T-cell (primary cell): ENCODE measurements at regions of chr22 and their contacts with region 1.

Region 1: GRCh38 chr22:49869845-49870712 is 16.4 kb downstream of the ZBED4 start:
- DNase-seq: peak in 20 of 35 experiments; percentile 15 to 76 (median 36)
- ATAC-seq: peak; percentile 60 to 74 (median 67)
- H3K4me3 ChIP-seq: no peak overlapping the region
- H3K4me3 Mint-ChIP-seq: peak overlapping the region; percentile 36 to 47 (median 37)
- H3K27ac ChIP-seq: peak overlapping the region; percentile 55
- H3K27ac Mint-ChIP-seq: peak overlapping the region; percentile 77 to 87
- H3K4me1 ChIP-seq: peaks cover 5 to 40% of the 10 kb centered on the region in 2 experiments
- H3K4me1 Mint-ChIP-seq: peaks cover 50 to 75% (median 72%) of the 10 kb centered on the region in 3 donors
- H3K27me3 ChIP-seq: no peaks in the 10 kb centered on the region
- H3K27me3 Mint-ChIP-seq: no peaks in the 10 kb centered on the region

Region 2: GRCh38 chr22:49592780-49593501 is 277.1 kb before region 1 on chr22:
- CTCF ChIA-PET with region 1: no interaction called
- POLR2A ChIA-PET with region 1: no interaction called
- DNase-seq: no peak
- ATAC-seq: no peak
- H3K4me3 ChIP-seq: no peak overlapping the region
- H3K4me3 Mint-ChIP-seq: no peak overlapping the region
- H3K27ac ChIP-seq: no peak overlapping the region
- H3K27ac Mint-ChIP-seq: no peak overlapping the region
- H3K4me1 ChIP-seq: no peaks in the 10 kb centered on the region
- H3K4me1 Mint-ChIP-seq: peaks cover 0 to 3% (median 0%) of the 10 kb centered on the region in 3 donors
- H3K27me3 ChIP-seq: peaks cover 0 to 3% of the 10 kb centered on the region in 2 experiments
- H3K27me3 Mint-ChIP-seq: no peaks in the 10 kb centered on the region

Region 3: DNA sequence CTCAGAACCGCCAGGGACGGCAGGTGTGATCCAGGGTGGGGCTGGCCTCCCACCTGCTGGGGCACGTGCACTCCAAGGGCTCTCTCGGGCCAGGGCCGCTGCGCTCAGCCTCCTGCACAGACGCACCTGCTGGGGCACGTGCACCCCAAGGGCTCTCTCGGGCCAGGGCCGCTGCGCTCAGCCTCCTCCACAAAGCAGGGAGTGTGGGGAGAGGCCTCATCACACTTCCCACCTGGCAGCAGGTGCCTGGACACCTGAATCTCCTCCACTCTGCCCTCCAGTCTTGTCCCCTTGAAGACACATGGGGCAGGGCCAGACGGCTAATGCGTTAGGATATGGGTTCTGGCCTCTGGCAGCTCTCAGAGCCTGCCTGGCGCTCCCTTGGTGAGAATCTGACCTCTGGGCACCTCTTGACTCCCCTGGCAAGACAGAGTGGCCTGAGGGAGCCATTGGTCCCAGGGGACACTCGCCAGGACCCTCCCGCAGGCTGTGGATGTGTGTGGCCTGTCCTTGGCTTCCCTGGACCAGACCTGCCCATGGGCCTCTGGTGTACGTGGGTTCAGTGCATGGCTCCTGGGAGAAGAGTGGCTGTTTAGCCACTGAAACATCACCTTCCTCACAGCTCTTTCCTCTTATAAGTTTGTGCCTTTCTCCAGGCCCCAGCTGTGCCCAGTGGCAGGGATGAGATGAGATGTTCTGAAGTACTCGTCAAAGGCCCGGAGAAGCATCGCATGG is 116.0 kb before region 1 on chr22:
- CTCF ChIA-PET with region 1: no interaction called
- POLR2A ChIA-PET with region 1: no interaction called
- DNase-seq: peak in 1 of 35 experiments; percentile 9
- ATAC-seq: no peak
- H3K4me3 ChIP-seq: no peak overlapping the region
- H3K4me3 Mint-ChIP-seq: no peak overlapping the region
- H3K27ac ChIP-seq: no peak overlapping the region
- H3K27ac Mint-ChIP-seq: no peak overlapping the region
- H3K4me1 ChIP-seq: no peaks in the 10 kb centered on the region
- H3K4me1 Mint-ChIP-seq: no peaks in the 10 kb centered on the region
- H3K27me3 ChIP-seq: peaks cover 0 to 36% of the 10 kb centered on the region in 2 experiments
- H3K27me3 Mint-ChIP-seq: peaks cover 0 to 7% of the 10 kb centered on the region in 2 donors

Region 4: DNA sequence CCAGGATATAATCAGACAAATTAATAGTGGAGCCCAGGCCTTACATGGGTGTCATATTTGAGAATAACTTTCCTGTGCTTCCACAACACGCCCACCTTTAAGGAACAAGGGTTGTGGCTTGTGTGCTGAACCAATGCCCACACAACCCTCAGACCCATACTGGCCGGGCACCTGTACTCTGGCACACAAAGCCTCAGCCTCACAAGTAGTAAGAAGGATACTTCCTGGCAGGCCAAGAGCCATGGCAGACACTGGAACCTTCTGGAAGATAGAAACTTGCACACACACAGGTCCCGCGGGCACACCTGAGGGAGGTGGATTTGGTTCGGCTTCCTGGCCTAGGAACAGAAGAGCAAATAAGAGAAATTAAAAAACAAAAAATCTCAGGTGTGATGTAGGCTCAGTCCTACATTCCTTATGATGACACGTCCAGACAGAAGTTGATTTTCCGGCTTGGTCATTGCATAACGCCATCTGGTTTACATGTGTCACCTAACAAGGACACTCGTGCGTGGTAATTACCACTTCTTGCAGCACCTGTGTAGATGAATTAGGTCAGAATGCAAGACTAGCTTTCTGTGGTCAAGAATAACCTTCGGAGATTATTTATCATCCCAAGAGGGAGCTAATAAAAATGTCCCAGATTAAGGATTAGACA is 36.6 kb before region 1 on chr22:
- CTCF ChIA-PET with region 1: no interaction called
- POLR2A ChIA-PET with region 1: no interaction called
- DNase-seq: no peak
- ATAC-seq: no peak
- H3K4me3 ChIP-seq: no peak overlapping the region
- H3K4me3 Mint-ChIP-seq: no peak overlapping the region
- H3K27ac ChIP-seq: no peak overlapping the region
- H3K27ac Mint-ChIP-seq: peak overlapping the region in 1 of 2 donors; percentile 27
- H3K4me1 ChIP-seq: peaks cover 8 to 28% of the 10 kb centered on the region in 2 experiments
- H3K4me1 Mint-ChIP-seq: peaks cover 30 to 36% (median 32%) of the 10 kb centered on the region in 3 donors
- H3K27me3 ChIP-seq: no peaks in the 10 kb centered on the region
- H3K27me3 Mint-ChIP-seq: no peaks in the 10 kb centered on the region

Region 5: GRCh38 chr22:49848690-49849160 is 21.4 kb before region 1 on chr22:
- CTCF ChIA-PET with region 1: no interaction called
- POLR2A ChIA-PET with region 1: no interaction called
- DNase-seq: peak in 1 of 35 experiments; percentile 39
- ATAC-seq: no peak
- H3K4me3 ChIP-seq: peak overlapping the region; percentile 47 to 51
- H3K4me3 Mint-ChIP-seq: peak overlapping the region in 1 of 3 donors; percentile 58
- H3K27ac ChIP-seq: no peak overlapping the region
- H3K27ac Mint-ChIP-seq: no peak overlapping the region
- H3K4me1 ChIP-seq: peaks cover 9 to 41% of the 10 kb centered on the region in 2 experiments
- H3K4me1 Mint-ChIP-seq: peaks cover 19 to 29% (median 23%) of the 10 kb centered on the region in 3 donors
- H3K27me3 ChIP-seq: peaks cover 0 to 24% of the 10 kb centered on the region in 2 experiments
- H3K27me3 Mint-ChIP-seq: peaks cover 0 to 4% of the 10 kb centered on the region in 2 donors

Region 6: DNA sequence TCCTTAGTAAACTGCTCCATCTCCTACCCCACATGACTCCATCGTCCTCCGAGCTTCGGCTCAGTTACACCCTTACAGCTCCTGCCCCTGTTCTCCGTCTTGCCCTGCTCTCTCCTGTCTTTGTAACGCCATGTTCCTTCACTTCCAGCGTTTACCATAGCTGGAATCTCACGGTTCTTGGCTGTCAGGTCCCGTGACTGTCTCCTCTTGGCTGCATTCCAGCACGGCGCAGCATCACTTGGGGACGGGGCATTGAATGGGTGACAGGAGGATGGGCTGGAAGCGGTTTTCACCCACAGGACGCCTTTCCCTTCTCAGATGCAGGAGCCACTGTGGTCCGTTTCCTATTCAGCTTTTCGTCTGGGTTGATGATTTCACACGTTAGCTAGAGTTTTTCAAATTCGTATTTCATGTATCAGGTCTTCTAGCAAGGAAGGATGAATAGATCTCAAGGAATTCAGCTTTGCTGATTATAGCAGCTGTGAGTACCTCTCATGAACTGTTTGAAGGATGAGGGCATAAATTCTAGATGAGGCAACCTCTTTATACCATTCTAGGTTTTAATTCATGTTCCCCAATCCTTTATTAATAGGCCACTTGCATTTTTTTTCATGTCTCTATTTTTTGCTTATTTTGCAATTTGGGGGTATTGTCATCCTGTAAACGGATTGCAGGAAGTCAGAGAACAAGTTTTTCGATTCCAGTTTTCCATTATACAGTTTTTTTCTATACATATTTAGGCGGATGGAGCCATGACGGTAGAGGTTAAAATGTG is 12.6 kb after region 1 on chr22:
- CTCF ChIA-PET with region 1: interaction called in 1 of 2 experiments, 3 read pairs
- POLR2A ChIA-PET with region 1: interaction called, 5 to 13 read pairs
- DNase-seq: no peak
- ATAC-seq: no peak
- H3K4me3 ChIP-seq: no peak overlapping the region
- H3K4me3 Mint-ChIP-seq: no peak overlapping the region
- H3K27ac ChIP-seq: no peak overlapping the region
- H3K27ac Mint-ChIP-seq: peak overlapping the region in 1 of 2 donors; percentile 50
- H3K4me1 ChIP-seq: peaks cover 0 to 18% of the 10 kb centered on the region in 2 experiments
- H3K4me1 Mint-ChIP-seq: peaks cover 32 to 44% (median 35%) of the 10 kb centered on the region in 3 donors
- H3K27me3 ChIP-seq: no peaks in the 10 kb centered on the region
- H3K27me3 Mint-ChIP-seq: no peaks in the 10 kb centered on the region